ENCODE measurements at regions of chr2 and their contacts with region 1.

Region 1: DNA sequence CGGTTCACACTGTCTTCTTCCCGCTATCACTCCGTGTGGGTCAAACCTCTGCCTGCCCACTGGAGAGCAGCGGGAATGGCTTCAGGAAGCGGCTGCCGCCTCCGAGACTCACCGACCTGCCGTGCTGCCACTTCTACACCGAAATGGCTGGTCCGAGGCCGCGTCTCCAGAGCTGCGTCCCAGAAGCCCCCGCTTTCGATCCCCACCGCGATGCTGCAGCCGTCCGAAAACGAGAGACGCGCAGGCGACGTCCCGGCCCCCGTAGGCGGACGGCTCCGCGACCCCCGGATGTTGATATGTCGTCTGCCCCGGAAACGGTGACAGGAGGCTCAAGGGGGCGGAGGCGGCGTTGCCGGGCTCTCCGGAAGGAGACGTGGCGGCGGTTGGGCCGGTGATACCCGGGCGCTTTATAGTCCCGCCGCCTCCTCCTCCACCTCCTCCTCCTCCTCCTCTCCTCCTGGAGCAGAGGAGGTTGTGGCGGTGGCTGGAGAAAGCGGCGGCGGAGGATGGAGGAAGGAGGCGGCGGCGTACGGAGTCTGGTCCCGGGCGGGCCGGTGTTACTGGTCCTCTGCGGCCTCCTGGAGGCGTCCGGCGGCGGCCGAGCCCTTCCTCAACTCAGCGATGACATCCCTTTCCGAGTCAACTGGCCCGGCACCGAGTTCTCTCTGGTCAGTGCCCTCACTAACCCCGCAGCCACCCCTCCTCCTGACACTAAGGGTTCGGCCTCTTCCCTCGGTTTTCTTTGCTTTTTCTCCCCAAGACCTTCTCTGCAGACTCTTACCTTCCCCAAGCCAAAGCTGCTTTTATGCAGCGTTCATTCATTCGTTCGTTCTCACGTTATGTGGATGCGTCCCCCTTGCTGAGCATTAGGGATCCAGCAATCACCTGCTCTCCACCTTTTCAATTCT is at the starts of genes ASB3 and ERLEC1:
- DNase-seq: peak; percentile 96
- ATAC-seq: peak; percentile 94
- H3K4me3 Mint-ChIP-seq: peak within 1 kb of the TSS; percentile 100
- H3K27ac Mint-ChIP-seq: peak within 1 kb of the TSS; percentile 94
- H3K4me1 Mint-ChIP-seq: peaks cover 47% of the 10 kb centered on the region
- H3K27me3 Mint-ChIP-seq: no peaks in the 10 kb centered on the region
- total RNA-seq, gene ASB3: 27.6 to 30.1 TPM
- total RNA-seq, gene ERLEC1: 21.6 to 30.8 TPM

Region 2: DNA sequence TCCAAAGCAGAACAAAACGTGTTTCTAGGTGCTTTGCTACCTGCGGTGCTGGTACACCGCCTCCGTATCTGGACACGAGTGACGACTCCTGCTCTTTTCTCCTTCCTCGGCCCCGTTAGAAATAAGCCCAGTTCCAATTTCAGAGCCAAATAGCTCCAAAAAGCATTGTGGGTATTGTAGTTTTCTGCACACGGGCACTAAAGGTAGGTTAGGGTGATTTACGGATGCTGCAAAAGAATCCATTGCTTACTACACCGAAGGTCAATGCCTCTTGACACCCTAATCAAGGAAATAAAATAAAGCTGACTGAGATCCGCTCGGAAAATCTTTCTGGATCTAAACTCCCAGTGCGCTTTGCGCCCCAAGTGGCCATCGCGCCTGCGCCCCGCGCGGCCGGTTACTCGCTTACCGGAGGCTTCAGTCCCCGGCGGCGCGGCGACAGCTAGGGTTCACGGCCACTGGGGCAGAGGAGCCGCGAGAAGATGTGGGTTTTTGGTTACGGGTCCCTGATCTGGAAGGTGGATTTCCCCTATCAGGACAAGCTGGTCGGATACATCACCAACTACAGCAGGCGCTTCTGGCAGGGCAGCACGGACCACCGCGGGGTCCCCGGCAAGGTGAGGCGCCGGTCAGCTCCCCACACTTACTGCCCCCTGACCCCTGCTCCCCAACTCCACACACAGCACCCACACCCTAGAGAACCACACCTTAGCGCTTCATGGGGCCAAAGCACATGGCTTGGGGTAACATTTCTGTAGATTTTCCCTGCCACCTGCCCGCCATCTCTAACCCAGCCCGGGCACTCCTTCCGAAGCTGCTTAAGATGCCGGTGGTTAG is 19.3 kb before region 1 on chr2 and contains the start of gene CHAC2:
- CTCF ChIA-PET with region 1: interaction called, 16 read pairs
- DNase-seq: peak; percentile 91
- ATAC-seq: peak; percentile 96
- H3K4me3 Mint-ChIP-seq: peak within 1 kb of the TSS; percentile 94
- H3K27ac Mint-ChIP-seq: peak within 1 kb of the TSS; percentile 93
- H3K4me1 Mint-ChIP-seq: peaks cover 34% of the 10 kb centered on the region
- H3K27me3 Mint-ChIP-seq: no peaks in the 10 kb centered on the region
- total RNA-seq, gene CHAC2: 13.3 to 21.9 TPM

Region 3: DNA sequence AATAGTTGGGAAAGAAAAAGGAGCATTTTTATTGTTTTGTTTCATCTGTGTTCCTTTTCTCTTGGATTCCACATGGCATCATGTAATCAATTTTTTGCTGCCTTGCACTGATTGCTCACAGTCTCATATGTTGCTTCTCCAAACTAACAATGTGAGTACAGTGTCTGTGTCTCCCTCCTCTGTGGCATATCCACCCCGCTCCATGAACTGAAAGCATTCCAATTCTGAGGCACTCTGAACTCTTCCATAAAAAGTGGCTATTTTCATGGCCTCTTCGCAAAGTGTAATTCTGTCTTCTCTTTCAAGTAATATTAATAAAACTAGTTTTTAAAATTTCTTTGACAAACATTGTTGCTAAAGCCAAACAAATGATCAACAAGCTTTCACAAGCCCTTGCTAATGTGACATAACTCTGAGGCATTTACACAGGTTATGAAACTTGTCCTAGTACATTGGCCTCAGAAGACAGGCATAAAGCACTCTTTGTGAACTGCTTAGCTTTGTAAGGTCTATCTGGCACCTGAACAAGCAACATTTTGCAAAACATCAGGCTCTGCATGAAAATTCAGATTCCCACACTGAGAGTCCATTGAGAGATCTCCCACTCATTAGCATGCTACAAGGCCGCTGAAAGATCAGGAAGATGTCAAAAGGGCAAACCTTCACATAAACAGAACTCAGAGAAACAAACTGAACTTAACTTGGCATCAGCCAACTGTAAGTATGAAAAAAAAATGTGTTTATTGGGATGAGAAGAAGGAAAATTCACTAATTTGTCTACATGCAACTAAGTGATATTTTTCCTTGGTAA is 39.8 kb after region 1 on chr2:
- CTCF ChIA-PET with region 1: no interaction called
- DNase-seq: no peak
- ATAC-seq: no peak
- H3K4me3 Mint-ChIP-seq: no peak overlapping the region
- H3K27ac Mint-ChIP-seq: no peak overlapping the region
- H3K4me1 Mint-ChIP-seq: no peaks in the 10 kb centered on the region
- H3K27me3 Mint-ChIP-seq: no peaks in the 10 kb centered on the region

Measured in activated CD8-positive, alpha-beta memory T cell treated with anti-CD3 and anti-CD28 coated beads, Interleukin-2, amount 10 ng/mL, durations not matched to agents 7 days and 5 days (primary cell).